CD14-positive monocyte (primary cell): ENCODE measurements at regions of chr1 and their contacts with region 1.

Region 1: DNA sequence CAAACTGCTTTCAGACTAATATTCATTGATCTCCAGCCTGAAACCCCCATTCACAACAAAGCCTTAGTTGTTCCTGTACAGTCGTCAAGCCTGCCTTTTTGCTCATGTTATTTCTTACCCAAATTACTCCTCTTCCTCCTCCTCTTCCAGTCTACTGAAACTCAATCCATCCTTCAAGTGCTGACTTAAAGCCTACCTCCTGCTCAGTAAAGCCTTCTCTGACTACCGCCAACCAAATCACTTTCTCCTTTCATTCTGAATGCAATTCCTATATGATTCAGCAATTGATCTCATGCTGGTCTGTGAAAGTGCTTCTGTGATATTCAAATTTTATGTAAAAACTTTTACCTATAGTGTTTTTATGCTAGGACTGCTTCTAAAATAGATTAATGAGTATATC is 18.6 kb downstream of the TAF5L start:
- DNase-seq: no peak
- H3K4me3 ChIP-seq: no peak overlapping the region
- H3K4me3 Mint-ChIP-seq: no peak overlapping the region
- H3K27ac ChIP-seq: no peak overlapping the region
- H3K27ac Mint-ChIP-seq: peak overlapping the region in 1 of 7 donors; percentile 0
- H3K4me1 ChIP-seq: no peaks in the 10 kb centered on the region
- H3K4me1 Mint-ChIP-seq: no peaks in the 10 kb centered on the region
- H3K27me3 ChIP-seq: no peaks in the 10 kb centered on the region
- H3K27me3 Mint-ChIP-seq: no peaks in the 10 kb centered on the region
- CTCF ChIP-seq: no peak

Region 2: DNA sequence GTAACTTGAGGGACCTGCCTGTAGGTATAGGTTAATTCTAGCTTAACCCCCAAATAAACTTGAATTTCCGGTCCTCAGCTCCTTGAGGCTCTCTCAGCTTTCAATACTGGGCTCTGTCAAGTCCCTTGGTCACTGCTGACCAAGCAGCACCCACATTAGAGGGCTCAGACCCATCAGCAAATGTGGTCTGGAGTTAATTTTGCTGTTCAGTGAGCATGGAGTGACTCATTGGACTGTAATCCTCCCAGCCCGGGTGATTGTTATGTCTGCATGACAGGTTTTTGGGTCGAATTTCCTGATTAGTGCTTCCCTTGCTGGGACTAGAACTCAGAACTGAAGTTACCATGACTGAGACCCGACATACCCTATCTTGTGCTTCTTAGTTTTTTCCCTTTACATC is 149.3 kb after region 1 on chr1:
- intact Hi-C with region 1: loop called in 1 of 2 experiments (anchors 5 kb)
- DNase-seq: no peak
- H3K4me3 ChIP-seq: no peak overlapping the region
- H3K4me3 Mint-ChIP-seq: no peak overlapping the region
- H3K27ac ChIP-seq: no peak overlapping the region
- H3K27ac Mint-ChIP-seq: no peak overlapping the region
- H3K4me1 ChIP-seq: no peaks in the 10 kb centered on the region
- H3K4me1 Mint-ChIP-seq: peaks cover 4% of the 10 kb centered on the region
- H3K27me3 ChIP-seq: no peaks in the 10 kb centered on the region
- H3K27me3 Mint-ChIP-seq: peaks cover 0 to 5% (median 0%) of the 10 kb centered on the region in 3 donors
- CTCF ChIP-seq: no peak